PC-9 (cell line): ENCODE measurements at regions of chr15 and their contacts with region 1.

Region 1: DNA sequence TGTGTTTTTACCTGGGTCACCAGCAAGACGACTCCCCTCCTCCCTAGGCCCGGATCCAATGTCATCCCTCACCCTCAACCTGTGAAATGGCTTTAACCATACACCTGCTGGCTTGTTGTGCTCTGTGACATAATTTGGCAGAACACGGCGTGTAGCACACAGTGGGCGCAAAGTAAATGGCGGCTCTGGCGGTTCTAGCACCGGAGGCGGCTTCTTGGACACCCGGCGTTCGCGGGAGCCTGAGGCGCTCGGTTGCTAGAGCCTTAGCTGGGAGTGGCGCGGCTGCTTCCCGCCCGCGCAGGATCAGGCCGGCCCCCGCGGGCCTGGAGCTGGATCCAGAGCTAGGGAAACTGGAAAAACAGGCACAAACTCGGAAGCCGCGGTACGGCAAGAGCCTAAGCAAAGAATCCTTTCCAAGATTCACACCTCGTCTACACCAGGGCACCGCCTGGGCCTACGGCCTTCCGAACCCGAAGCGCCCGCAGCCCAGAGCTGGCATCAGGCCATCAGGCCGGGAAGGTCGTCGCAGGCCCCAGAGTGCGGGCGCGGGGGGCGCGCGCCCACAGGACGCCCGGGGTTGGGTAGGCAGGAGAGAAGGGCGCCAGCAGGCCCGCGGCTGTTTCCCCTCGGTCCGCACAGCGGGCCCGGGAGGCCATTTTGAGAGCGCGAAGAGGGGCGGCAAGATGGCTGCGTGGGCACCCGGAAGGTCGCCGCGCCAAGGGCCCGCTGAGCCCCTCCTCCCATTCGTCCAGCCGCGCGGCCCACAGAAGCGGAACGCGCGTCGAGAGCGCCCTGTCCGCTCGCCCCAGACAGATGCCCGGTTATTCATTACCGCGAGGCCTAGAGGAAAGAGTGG is 43.9 kb upstream of the POLG start:
- DNase-seq: peak; percentile 55 to 80
- H3K4me3 ChIP-seq: peak overlapping the region; percentile 9; the same call in 1 of the 2 replicates
- H3K27ac ChIP-seq: peak overlapping the region; percentile 78
- H3K4me1 ChIP-seq: peaks cover 38% of the 10 kb centered on the region
- H3K27me3 ChIP-seq: no peaks in the 10 kb centered on the region
- CTCF ChIP-seq: no peak

Region 2: GRCh38 chr15:89399238-89400120 is 21.0 kb after region 1 on chr15:
- CTCF ChIA-PET with region 1: no interaction called
- POLR2A ChIA-PET with region 1: interaction called, 6 read pairs
- intact Hi-C with region 1: loop called (anchors 2 kb)
- DNase-seq: peak in 1 of 2 experiments; percentile 42
- H3K4me3 ChIP-seq: peak overlapping the region; percentile 50; the same call in 1 of the 2 replicates
- H3K27ac ChIP-seq: no peak overlapping the region
- H3K4me1 ChIP-seq: peaks cover 15% of the 10 kb centered on the region; the same call in 1 of the 2 replicates
- H3K27me3 ChIP-seq: no peaks in the 10 kb centered on the region
- CTCF ChIP-seq: 0 out of 2 replicates have a peak, but pooled peaks have one; percentile 26

Region 3: GRCh38 chr15:89442671-89443307 is 64.3 kb after region 1 on chr15:
- CTCF ChIA-PET with region 1: interaction called, 13 read pairs
- POLR2A ChIA-PET with region 1: no interaction called
- intact Hi-C with region 1: no loop called
- DNase-seq: peak in 1 of 2 experiments; percentile 56
- H3K4me3 ChIP-seq: no peak overlapping the region
- H3K27ac ChIP-seq: no peak overlapping the region
- H3K4me1 ChIP-seq: no peaks in the 10 kb centered on the region
- H3K27me3 ChIP-seq: peaks cover 28% of the 10 kb centered on the region
- CTCF ChIP-seq: peak; percentile 84